ENCODE measurements at regions of chr15 and their contacts with region 1.

Region 1: DNA sequence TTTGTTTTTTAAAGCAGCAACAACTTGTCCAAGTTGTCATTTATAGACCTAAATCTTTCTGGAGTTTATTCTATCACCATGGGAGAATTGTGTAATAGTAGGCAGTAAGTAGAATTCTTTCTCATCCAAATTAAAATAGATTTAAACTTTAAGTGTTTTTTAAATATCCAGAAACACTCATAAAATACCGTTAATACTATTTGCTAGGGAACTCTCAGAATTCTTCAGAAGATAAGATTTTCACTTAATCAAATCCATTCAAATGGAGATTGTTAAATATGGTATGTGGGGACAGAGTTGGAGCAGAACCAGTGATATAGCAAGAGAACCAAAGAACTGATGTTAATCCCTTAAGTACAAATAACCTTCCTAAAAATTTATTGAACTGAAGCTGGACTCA is 71.0 kb downstream of the ARIH1 start:
- DNase-seq: no peak
- H3K4me3 ChIP-seq: no peak overlapping the region
- CTCF ChIP-seq: no peak

Region 2: DNA sequence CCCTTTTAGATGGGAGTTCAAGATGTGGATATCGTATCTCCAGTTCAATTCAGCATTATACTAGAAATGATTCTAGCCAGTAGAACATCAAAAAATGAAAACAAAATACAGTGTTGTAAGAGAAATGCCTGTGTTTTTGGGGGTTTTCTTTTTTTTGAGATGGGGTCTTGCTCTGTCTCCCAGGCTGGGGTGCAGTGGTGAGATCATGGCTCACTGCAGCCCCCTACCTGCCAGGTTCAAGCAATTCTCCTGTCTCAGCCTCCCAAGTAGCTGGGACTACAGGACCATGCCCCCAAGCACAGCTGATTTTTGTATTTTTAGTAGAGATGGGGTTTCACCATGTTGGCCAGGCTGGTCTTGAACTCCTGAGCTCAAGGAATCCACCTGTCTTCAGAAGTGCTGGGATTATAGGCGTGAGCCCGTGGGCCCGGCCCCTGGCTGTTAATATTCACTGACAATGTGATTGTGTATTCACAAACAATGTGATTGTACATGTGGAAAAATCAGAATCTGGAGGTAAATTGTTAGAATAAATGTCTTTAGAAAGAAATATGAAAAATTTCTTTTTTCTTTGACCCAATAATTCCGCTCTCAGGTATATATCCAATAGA is 12.1 kb before region 1 on chr15:
- CTCF ChIA-PET with region 1: interaction called, 10 read pairs
- POLR2A ChIA-PET with region 1: no interaction called
- DNase-seq: no peak
- H3K4me3 ChIP-seq: no peak overlapping the region
- CTCF ChIP-seq: no peak

Measured in AG04449 (cell line).